GM23248 (cell line): ENCODE measurements at regions of chr3 and their contacts with region 1.

Region 1: DNA sequence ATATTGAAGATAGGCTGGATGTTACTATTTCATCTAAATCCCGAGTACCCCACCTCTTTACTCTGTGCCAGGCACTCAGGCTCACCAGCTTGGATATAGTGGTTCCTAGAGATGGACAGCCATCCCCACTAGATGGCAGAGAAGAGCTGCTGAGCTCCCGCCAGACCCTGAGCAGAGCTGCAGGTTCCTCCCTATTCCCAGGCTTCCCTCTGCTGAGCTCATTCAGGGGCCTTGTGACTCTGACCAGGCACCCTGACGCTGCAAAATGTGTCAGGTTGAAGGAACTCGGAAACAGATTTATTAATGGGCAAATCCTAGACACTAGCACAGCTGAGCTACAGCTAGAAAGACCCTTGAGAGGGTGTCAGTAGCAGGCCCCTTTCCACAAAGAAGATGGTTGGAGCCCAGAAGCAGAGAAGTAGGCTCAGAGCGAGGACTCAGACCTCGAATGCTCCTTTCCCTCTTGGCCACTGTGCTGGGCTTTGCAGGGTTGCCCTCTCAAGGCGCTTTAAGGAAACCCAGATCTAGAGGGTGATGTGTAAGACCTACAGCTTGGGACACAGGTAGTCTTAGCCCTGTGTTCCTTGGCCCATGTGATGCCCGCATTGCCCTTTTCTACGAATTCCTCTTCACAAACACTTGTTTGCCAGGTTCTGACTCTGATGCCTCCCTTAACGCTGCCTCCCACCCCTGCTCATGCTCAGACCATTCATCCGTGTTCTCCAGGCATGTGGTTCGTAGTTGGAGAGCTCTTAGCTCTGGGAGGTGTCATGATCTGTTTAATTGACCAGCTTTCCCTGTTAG is 38.0 kb upstream of the RHO start:
- DNase-seq: peak; percentile 98
- H3K4me3 ChIP-seq: no peak overlapping the region
- H3K27ac ChIP-seq: peak overlapping the region; percentile 71
- H3K4me1 ChIP-seq: peaks cover 37% of the 10 kb centered on the region
- H3K27me3 ChIP-seq: no peaks in the 10 kb centered on the region

Region 2: GRCh38 chr3:129224984-129225393 is 265.5 kb before region 1 on chr3:
- in situ Hi-C with region 1: no loop called
- DNase-seq: peak; percentile 89
- H3K4me3 ChIP-seq: peak overlapping the region; percentile 59
- H3K27ac ChIP-seq: peak overlapping the region; percentile 89
- H3K4me1 ChIP-seq: peaks cover 40% of the 10 kb centered on the region
- H3K27me3 ChIP-seq: no peaks in the 10 kb centered on the region

Region 3: GRCh38 chr3:129606636-129607390 is 116.4 kb after region 1 on chr3 and contains the start of gene PLXND1:
- in situ Hi-C with region 1: loop called (anchors 10 kb)
- DNase-seq: peak; percentile 80
- H3K4me3 ChIP-seq: peak within 1 kb of the TSS; percentile 75
- H3K27ac ChIP-seq: peak within 1 kb of the TSS; percentile 89
- H3K4me1 ChIP-seq: peaks cover 37% of the 10 kb centered on the region
- H3K27me3 ChIP-seq: no peaks in the 10 kb centered on the region
- total RNA-seq, gene PLXND1: 67.2 and 83.0 TPM in 2 replicates

Region 4: DNA sequence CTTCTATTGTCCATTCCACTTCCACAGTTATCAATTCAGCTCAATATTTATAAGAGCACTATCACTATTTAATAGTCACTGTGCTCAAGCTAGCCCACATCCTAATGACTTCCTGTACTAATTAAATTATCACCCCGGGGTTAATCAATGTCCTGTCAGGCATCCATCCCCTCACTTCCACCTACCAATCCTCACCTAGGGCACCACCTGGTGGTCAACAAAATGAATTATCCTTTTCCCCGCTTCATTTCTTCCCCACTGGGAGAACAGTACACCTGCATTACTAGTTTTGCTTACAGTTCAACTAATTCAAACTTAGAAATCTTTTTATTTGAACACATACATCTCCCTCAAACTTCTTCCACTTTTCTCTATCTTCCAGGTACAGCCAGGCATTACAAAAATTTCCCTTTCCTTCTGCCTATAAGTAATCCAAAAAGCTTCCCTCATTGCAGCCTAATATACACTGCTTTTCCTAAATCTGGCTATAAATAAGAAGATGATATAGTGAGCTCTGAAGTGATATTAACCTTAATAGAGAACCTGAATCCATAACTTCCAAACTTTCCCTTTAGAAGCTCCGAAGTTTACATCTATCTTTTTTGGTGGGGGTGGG is 334.6 kb after region 1 on chr3:
- in situ Hi-C with region 1: loop called (anchors 25 kb)
- DNase-seq: peak; percentile 65
- H3K4me3 ChIP-seq: no peak overlapping the region
- H3K27ac ChIP-seq: no peak overlapping the region
- H3K4me1 ChIP-seq: peaks cover 21% of the 10 kb centered on the region
- H3K27me3 ChIP-seq: no peaks in the 10 kb centered on the region